ENCODE measurements at regions of chr1 and their contacts with region 1.

Region 1: GRCh38 chr1:6245086-6245868 is 1.3 kb downstream of the HES3 start:
- DNase-seq: no peak
- H3K4me3 ChIP-seq: no peak overlapping the region
- H3K27ac ChIP-seq: no peak overlapping the region
- H3K4me1 ChIP-seq: peaks cover 37% of the 10 kb centered on the region
- H3K27me3 ChIP-seq: peaks cover 27% of the 10 kb centered on the region
- CTCF ChIP-seq: peak; percentile 69 to 85 (median 80)
- POLR2A ChIP-seq: no peak

Region 2: DNA sequence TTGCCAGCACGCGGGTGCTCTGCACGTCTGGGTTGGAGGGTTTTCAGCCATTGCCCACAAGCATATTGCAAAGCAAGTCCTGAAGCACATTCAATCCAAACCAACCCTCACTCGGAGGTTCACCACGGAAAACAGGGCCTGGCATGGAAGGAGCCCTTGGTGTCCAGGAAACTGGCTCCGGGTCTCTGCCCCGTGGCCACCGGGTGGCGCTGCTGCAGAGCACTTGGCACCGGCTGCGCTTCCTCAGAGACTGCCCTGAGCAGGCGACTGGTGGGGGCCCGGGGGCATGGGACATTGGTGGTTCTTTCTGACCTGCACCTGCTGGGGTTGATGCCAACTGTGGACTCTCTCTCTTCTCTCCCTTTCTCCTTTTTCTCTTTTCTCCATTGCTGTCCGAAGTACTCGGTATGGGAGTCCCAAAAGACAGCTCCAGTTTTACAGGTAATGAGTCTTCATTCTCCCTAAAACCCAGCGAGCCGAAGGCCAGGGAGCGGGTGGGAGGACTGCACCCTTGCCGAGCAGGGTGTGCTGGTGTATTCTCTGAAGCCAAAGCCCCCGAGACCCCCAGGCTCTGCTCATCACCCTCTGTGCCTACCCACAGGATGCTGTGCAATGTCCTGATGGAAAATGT is 203.7 kb before region 1 on chr1:
- intact Hi-C with region 1: no loop called
- DNase-seq: no peak
- H3K4me3 ChIP-seq: no peak overlapping the region
- H3K27ac ChIP-seq: no peak overlapping the region
- H3K4me1 ChIP-seq: no peaks in the 10 kb centered on the region
- H3K27me3 ChIP-seq: no peaks in the 10 kb centered on the region
- CTCF ChIP-seq: peak in 1 of 3 experiments; percentile 21
- POLR2A ChIP-seq: no peak

Region 3: DNA sequence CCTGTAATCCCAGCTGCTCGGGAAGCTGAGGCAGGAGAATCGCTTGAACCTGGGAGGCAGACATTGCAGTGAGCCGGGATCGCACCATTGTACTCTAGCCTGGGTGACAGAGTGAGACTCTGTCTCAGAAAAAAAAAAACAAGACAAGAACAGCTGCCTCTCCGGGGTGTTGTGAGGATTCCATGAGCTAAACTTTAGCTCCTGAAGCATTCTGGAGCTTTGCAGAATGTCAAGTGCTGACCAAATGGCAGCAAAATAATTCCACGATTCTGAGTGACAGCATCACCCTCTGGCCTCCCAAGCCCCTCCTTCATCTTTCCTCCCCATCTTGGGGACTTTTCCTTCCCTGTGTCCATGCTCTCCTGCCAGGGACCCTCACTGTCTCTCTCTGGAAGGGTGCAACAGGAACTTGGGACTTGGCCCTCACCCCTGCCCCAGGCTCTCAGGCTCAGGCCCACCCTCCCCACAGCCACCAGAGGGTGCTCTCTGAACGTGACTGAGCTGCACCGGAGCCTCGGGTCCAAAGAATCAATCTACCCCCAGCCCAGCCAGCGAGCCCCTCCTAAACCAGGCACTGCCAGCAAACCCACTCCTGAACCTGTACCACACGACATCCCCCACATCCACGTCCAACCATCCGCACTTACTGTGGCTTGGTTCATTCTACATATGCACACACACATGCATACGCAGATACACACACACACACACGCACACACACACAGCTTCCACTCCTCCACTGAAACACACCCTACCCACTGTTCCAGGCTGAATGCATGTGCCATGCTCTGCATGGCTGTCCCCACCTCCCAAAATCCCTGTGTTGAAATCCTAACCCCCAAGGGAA is 102.6 kb after region 1 on chr1:
- intact Hi-C with region 1: loop called (anchors 5 kb)
- DNase-seq: peak in 1 of 2 donors; percentile 83
- H3K4me3 ChIP-seq: no peak overlapping the region
- H3K27ac ChIP-seq: no peak overlapping the region
- H3K4me1 ChIP-seq: peaks cover 21% of the 10 kb centered on the region
- H3K27me3 ChIP-seq: no peaks in the 10 kb centered on the region
- CTCF ChIP-seq: peak in 2 of 3 experiments; percentile 43 to 46
- POLR2A ChIP-seq: no peak

Region 4: GRCh38 chr1:6401673-6402072 is 156.4 kb after region 1 on chr1:
- intact Hi-C with region 1: loop called (anchors 5 kb)
- DNase-seq: no peak
- H3K4me3 ChIP-seq: no peak overlapping the region
- H3K27ac ChIP-seq: no peak overlapping the region
- H3K4me1 ChIP-seq: no peaks in the 10 kb centered on the region
- H3K27me3 ChIP-seq: no peaks in the 10 kb centered on the region
- CTCF ChIP-seq: no peak
- POLR2A ChIP-seq: no peak

Region 5: GRCh38 chr1:6438047-6438525 is 192.8 kb after region 1 on chr1:
- intact Hi-C with region 1: loop called (anchors 10 kb)
- DNase-seq: no peak
- H3K4me3 ChIP-seq: no peak overlapping the region
- H3K27ac ChIP-seq: no peak overlapping the region
- H3K4me1 ChIP-seq: peaks cover 9% of the 10 kb centered on the region
- H3K27me3 ChIP-seq: no peaks in the 10 kb centered on the region
- CTCF ChIP-seq: peak; percentile 46 to 89 (median 85)
- POLR2A ChIP-seq: no peak